ENCODE measurements at regions of chr12 and their contacts with region 1.

Region 1: GRCh38 chr12:62793256-62794217 is 141.4 kb downstream of the PPM1H start:
- DNase-seq: peak; percentile 66
- CTCF ChIP-seq: peak; percentile 93

Region 2: GRCh38 chr12:62588916-62589315 is 204.6 kb before region 1 on chr12:
- in situ Hi-C with region 1: loop called (anchors 5 kb)
- DNase-seq: no peak
- CTCF ChIP-seq: no peak

Region 3: GRCh38 chr12:63045020-63045860 is 251.7 kb after region 1 on chr12:
- in situ Hi-C with region 1: no loop called
- DNase-seq: no peak
- CTCF ChIP-seq: no peak

Region 4: DNA sequence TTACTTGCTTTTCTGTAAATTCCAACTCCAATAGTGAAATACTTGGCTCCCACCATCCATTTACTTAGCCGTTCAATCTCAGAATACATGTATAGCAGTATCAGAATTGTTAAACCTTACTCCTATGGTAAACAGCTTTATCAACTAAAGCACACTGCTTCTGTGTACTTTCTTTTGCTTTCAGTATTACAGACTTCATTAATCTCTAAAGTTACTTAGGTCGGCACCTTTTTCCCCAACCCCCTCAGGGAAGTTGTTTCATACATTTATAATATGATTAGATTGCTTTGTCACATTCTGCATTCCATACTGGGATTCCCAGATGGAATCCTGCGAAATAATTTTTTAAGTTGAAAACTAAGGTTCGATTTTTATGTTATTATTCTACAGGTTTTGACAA is 345.0 kb after region 1 on chr12:
- in situ Hi-C with region 1: no loop called
- DNase-seq: no peak
- CTCF ChIP-seq: no peak

Region 5: GRCh38 chr12:63228853-63229252 is 435.3 kb after region 1 on chr12:
- in situ Hi-C with region 1: no loop called
- DNase-seq: no peak
- CTCF ChIP-seq: no peak